ENCODE measurements at regions of chr17 and their contacts with region 1.

Region 1: GRCh38 chr17:64025732-64026294 is 5.4 kb upstream of the ICAM2 start:
- DNase-seq: peak; percentile 89
- H3K4me3 ChIP-seq: peak overlapping the region; percentile 18 to 19; a peak in 2 of 4 replicates
- H3K27ac ChIP-seq: no peak overlapping the region
- H3K4me1 ChIP-seq: no peaks in the 10 kb centered on the region
- H3K27me3 ChIP-seq: no peaks in the 10 kb centered on the region
- CTCF ChIP-seq: peak; percentile 99
- EP300 ChIP-seq: no peak
- RAD21 ChIP-seq: peak; percentile 76

Region 2: GRCh38 chr17:63707151-63707550 is 318.7 kb before region 1 on chr17:
- CTCF ChIA-PET with region 1: no interaction called
- POLR2A ChIA-PET with region 1: no interaction called
- DNase-seq: no peak
- H3K4me3 ChIP-seq: no peak overlapping the region
- H3K27ac ChIP-seq: no peak overlapping the region
- H3K4me1 ChIP-seq: peaks cover 4 to 26% of the 10 kb centered on the region in 2 experiments; a peak in 2 of 4 replicates
- H3K27me3 ChIP-seq: no peaks in the 10 kb centered on the region
- CTCF ChIP-seq: no peak
- EP300 ChIP-seq: no peak
- RAD21 ChIP-seq: no peak

Region 3: DNA sequence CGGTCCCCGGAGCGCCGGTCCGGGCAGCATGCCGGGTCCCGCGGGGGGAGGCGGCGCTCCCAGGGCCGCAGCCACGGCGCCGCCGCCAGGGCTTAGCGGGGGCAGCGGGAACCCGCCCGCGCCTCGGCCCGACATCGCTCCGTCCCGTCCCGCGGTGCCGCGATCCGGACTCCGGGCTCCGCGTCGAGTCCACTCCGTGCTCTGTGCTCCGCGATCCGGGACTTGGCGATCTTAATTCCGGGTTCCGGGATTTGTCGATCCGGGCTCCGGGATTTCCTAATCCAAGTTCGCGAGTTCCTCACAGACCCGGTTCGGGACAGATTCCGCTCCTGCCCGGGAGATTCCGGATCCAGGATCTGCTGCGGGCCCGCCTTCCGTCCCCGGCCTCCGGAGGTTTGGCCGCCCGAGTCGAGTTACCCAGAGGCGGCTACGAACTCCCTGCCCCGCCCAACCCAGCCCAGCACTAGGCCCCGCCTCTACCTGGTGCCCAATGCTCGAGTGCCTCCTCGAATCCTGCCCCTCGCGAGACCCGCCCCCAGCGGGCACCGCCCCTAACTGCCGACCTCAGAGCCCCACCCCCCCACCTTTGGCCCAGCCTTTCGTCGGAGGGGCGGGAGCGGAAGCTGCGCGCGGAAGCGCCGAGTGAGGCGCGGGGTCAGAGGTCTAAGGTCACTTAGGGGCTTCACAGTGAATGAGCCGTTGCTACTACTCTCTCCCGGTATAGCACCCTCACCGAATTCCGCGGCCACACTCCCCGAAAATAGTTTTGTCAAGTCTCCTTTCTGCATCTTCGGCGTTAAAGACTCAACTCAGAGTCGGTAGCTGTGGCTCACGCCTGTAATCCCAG is 183.1 kb before region 1 on chr17 and contains the start of gene SMARCD2:
- CTCF ChIA-PET with region 1: no interaction called
- POLR2A ChIA-PET with region 1: no interaction called
- DNase-seq: peak; percentile 100
- H3K4me3 ChIP-seq: peak within 1 kb of the TSS; percentile 59 to 76
- H3K27ac ChIP-seq: peak within 1 kb of the TSS; percentile 67 to 97
- H3K4me1 ChIP-seq: peaks cover 27 to 39% of the 10 kb centered on the region in 2 experiments
- H3K27me3 ChIP-seq: no peaks in the 10 kb centered on the region
- CTCF ChIP-seq: no peak
- EP300 ChIP-seq: peak; percentile 60 to 76; a peak in 3 of 4 replicates
- RAD21 ChIP-seq: no peak
- polyA plus RNA-seq, gene SMARCD2: 89.1 and 106 TPM in 2 replicates

Region 4: DNA sequence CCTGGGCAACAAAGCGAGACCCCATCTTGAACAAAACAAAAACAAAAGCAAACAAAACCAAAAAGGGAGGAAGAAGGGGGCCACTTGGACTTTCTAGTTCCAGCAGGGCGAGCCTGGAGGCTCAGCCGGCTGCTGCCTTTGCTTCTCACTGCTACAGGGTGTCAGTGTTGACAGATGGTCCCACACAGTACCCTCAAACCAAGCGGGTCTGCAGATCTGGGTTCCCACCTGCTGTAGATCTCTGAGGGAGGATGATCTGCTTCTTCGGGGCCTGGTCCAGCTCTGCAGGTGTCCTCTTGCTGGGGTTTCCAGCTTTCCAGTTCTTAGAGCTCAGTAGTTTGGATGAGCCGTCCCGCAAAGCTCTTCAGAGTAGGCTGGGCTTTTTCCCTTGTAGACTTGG is 121.5 kb before region 1 on chr17:
- CTCF ChIA-PET with region 1: interaction called, 11 read pairs
- POLR2A ChIA-PET with region 1: no interaction called
- DNase-seq: no peak
- H3K4me3 ChIP-seq: no peak overlapping the region
- H3K27ac ChIP-seq: no peak overlapping the region
- H3K4me1 ChIP-seq: no peaks in the 10 kb centered on the region
- H3K27me3 ChIP-seq: peaks cover 16% of the 10 kb centered on the region; the same call in 1 of the 2 replicates
- CTCF ChIP-seq: no peak
- EP300 ChIP-seq: no peak
- RAD21 ChIP-seq: no peak

Region 5: DNA sequence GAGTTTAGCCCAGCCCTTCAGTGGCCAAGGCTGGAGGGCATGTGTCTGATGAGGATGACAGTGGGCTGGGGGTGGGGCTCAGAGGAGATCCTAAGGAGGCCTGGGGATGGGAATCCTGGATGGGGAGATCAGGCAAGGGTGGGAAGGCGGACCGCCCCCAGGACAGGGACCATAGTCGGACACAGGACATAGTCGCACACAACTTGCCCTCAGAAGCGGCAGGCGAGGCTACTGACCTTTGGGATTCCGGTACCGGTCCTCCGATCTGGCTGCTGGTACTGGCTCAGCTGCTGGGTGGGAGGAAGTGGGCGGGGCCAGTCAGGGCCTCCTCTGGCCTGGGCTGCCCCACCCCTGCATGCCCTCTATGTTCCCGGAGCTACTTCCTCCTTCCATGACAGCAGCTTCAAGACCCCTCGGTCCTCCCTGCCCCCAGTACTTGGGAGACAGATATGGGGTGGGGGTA is 94.7 kb before region 1 on chr17:
- CTCF ChIA-PET with region 1: interaction called, 62 read pairs
- POLR2A ChIA-PET with region 1: no interaction called
- DNase-seq: peak; percentile 50
- H3K4me3 ChIP-seq: no peak overlapping the region
- H3K27ac ChIP-seq: no peak overlapping the region
- H3K4me1 ChIP-seq: no peaks in the 10 kb centered on the region
- H3K27me3 ChIP-seq: peaks cover 13% of the 10 kb centered on the region; the same call in 1 of the 2 replicates
- CTCF ChIP-seq: no peak
- EP300 ChIP-seq: no peak
- RAD21 ChIP-seq: no peak

Region 6: GRCh38 chr17:63966646-63967264 is 59.1 kb before region 1 on chr17:
- CTCF ChIA-PET with region 1: interaction called, 22 read pairs
- POLR2A ChIA-PET with region 1: no interaction called
- DNase-seq: no peak
- H3K4me3 ChIP-seq: no peak overlapping the region
- H3K27ac ChIP-seq: no peak overlapping the region
- H3K4me1 ChIP-seq: no peaks in the 10 kb centered on the region
- H3K27me3 ChIP-seq: no peaks in the 10 kb centered on the region
- CTCF ChIP-seq: no peak
- EP300 ChIP-seq: no peak
- RAD21 ChIP-seq: no peak

Region 7: GRCh38 chr17:64036198-64036922 is 10.5 kb after region 1 on chr17:
- CTCF ChIA-PET with region 1: interaction called, 266 read pairs
- POLR2A ChIA-PET with region 1: no interaction called
- DNase-seq: no peak
- H3K4me3 ChIP-seq: no peak overlapping the region
- H3K27ac ChIP-seq: no peak overlapping the region
- H3K4me1 ChIP-seq: no peaks in the 10 kb centered on the region
- H3K27me3 ChIP-seq: no peaks in the 10 kb centered on the region
- CTCF ChIP-seq: no peak; the same call in 1 of the 2 replicates
- EP300 ChIP-seq: no peak
- RAD21 ChIP-seq: no peak

Region 8: GRCh38 chr17:64097196-64097936 is 71.6 kb after region 1 on chr17:
- CTCF ChIA-PET with region 1: interaction called, 14 read pairs
- POLR2A ChIA-PET with region 1: no interaction called
- DNase-seq: no peak
- H3K4me3 ChIP-seq: no peak overlapping the region
- H3K27ac ChIP-seq: no peak overlapping the region; a peak in 1 of 4 replicates
- H3K4me1 ChIP-seq: no peaks in the 10 kb centered on the region; a peak in 1 of 4 replicates
- H3K27me3 ChIP-seq: no peaks in the 10 kb centered on the region
- CTCF ChIP-seq: no peak
- EP300 ChIP-seq: no peak
- RAD21 ChIP-seq: no peak

Region 9: DNA sequence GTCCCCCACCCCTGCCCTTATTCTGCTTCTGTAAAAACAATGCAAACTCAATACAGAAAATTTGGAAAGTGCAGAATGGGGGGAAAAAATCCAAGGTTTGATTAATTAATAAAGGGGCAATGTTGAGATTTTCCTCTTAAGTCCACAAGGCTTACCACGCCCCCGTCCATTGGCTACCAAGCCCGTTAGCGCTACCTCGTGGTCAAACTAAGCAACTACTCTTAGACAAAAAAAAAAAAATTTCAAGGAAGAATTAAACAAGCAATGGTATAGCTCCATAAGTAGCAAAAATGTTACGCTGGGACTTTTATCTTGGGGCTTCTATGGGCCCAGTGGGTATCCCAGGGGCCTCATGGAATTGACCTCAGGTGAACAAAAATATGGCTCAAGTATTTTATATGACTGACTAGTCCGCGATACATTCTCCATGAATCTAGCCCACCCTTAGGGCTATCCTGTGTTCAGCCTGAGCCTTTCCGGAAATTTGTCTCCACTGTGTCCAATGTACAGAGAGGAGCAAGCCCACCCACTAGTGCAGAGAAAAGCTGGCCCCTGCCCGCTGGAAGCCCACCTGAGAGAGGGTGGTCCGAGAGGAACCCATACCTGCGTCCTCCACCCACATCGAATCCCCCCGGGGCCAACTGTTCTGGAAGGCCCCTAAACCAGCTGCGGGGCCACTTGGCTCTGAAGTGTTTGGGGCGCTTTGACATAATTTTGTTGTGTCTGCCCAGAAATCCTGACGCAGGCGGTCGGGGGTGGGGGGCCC is 256.3 kb after region 1 on chr17:
- CTCF ChIA-PET with region 1: interaction called, 55 read pairs
- POLR2A ChIA-PET with region 1: no interaction called
- DNase-seq: peak; percentile 80
- H3K4me3 ChIP-seq: no peak overlapping the region
- H3K27ac ChIP-seq: no peak overlapping the region
- H3K4me1 ChIP-seq: peaks cover 0 to 3% of the 10 kb centered on the region in 2 experiments; a peak in 1 of 4 replicates
- H3K27me3 ChIP-seq: no peaks in the 10 kb centered on the region
- CTCF ChIP-seq: peak; percentile 99
- EP300 ChIP-seq: no peak
- RAD21 ChIP-seq: peak; percentile 100

Measured in SK-N-SH (cell line).